ENCODE measurements at regions of chr12 and their contacts with region 1.

Region 1: DNA sequence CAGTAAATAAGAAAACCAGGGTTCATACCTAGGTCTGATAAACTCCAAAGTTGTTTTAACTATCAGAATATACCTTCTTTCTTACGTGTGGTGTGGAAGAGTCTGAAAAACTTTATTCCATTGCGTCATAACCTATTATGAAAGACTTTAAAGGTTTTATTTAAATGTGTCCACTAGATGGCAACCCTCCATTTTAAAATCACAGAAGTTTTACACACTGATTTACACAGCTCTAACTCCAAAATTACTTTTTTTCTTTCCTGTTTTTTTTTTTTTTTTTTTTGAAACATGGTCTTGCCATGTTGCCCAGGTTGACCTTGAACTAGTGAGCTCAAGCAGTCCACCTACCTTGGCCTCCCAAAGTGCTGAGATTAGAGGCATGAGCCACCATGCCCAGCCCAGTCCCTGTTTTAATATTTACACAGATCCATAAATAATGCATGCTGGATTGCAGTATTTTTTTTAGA is 17.3 kb upstream of the TMPRSS12 start:
- DNase-seq: no peak
- ATAC-seq: peak; percentile 81

Region 2: GRCh38 chr12:50482566-50482965 is 342.8 kb before region 1 on chr12:
- intact Hi-C with region 1: no loop called
- DNase-seq: no peak
- ATAC-seq: no peak

Region 3: GRCh38 chr12:50986966-50987737 is 161.7 kb after region 1 on chr12:
- intact Hi-C with region 1: loop called (anchors 5 kb)
- DNase-seq: no peak
- ATAC-seq: peak; percentile 81